Adrenal gland (tissue), 19 donors: ENCODE measurements at regions of chr1 and their contacts with region 1.

Region 1: DNA sequence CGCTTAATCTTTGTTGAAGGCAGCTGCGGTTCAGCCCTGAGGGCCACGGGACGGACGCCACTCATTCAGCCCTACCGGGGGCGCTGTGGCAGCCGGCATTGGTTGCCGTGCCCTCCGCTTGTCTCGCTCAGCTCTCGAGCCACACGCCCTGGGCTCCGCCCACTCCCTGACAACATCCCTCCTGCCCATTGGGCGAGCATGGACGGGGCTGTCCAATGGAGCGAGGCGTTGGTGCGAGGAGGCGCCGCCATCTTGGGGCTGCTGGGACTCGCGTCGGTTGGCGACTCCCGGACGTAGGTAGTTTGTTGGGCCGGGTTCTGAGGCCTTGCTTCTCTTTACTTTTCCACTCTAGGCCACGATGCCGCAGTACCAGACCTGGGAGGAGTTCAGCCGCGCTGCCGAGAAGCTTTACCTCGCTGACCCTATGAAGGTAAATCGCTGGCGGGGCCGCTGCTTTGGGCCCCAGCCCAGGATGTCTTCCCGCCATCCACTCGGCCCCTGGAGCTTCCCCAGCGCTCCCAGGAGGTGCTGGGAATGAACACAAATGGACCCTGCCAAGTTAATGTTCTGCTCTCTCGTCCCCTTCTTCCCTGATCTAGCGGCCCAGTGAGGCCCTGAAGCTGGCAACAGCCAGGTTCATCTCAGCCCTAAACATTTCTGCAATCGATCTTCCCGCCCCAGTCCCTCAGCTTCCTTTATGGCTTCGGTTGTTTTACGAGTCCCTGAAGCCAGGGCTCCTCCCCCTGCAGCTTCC is at the start of gene SRP9:
- DNase-seq: peak; percentile 98 to 99 (median 99)
- H3K4me3 ChIP-seq: peak within 1 kb of the TSS; percentile 18 to 70 (median 41)
- H3K27ac ChIP-seq: peak within 1 kb of the TSS; percentile 27 to 98 (median 89)
- H3K4me1 ChIP-seq: peaks cover 17 to 61% of the 10 kb centered on the region in 2 donors
- H3K27me3 ChIP-seq: no peaks in the 10 kb centered on the region
- CTCF ChIP-seq: peak; percentile 68 to 93 (median 88)
- POLR2A ChIP-seq: peak; percentile 76 to 90
- total RNA-seq, gene SRP9: 197 to 429 (median 294) TPM

Region 2: DNA sequence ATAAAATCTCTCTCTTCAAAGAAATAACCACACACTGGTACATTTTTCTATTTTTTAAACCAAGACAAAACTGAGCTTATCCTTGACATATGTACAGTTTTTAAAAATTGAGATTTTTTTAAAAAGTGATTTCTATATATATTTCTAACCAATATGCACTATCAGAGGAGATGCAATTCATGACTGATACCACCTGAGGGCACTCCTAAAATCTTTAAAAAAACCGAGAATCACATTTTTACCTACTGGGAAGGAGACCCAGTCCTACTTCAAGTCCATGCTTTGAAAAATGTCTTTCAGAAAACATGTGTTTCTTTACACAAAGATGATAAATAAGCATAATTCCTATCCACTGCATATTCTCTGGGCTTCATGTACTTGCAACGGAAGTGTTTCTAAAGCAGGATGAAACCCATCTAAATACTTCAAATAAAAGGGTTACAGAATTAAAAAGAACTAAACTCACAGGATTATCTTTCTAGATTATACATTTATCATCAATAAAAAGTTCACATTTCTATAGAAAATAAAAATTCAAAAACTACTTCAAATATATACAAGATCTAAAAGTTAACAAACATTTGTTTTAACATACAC is 223.4 kb before region 1 on chr1:
- intact Hi-C with region 1: loop called (anchors 5 to 10 kb)
- DNase-seq: no peak
- H3K4me3 ChIP-seq: no peak overlapping the region
- H3K27ac ChIP-seq: no peak overlapping the region
- H3K4me1 ChIP-seq: no peaks in the 10 kb centered on the region
- H3K27me3 ChIP-seq: no peaks in the 10 kb centered on the region
- CTCF ChIP-seq: peak; percentile 24 to 69 (median 57)
- POLR2A ChIP-seq: no peak

Region 3: GRCh38 chr1:225809842-225810578 is 32.2 kb after region 1 on chr1 and contains the start of gene EPHX1:
- intact Hi-C with region 1: loop called in 1 of 2 experiments (anchors 2 kb)
- DNase-seq: peak; percentile 91 to 95 (median 93)
- H3K4me3 ChIP-seq: peak within 1 kb of the TSS; percentile 30 to 93 (median 78)
- H3K27ac ChIP-seq: peak within 1 kb of the TSS; percentile 81 to 98 (median 97)
- H3K4me1 ChIP-seq: peaks cover 41 to 47% of the 10 kb centered on the region in 2 donors
- H3K27me3 ChIP-seq: no peaks in the 10 kb centered on the region
- CTCF ChIP-seq: peak in 4 of 6 experiments; percentile 12 to 41 (median 20)
- POLR2A ChIP-seq: peak; percentile 94 to 97
- total RNA-seq, gene EPHX1: 251 to 3,548 (median 1,695) TPM

Region 4: GRCh38 chr1:225845571-225846259 is 68.0 kb after region 1 on chr1:
- intact Hi-C with region 1: loop called in 1 of 2 experiments (anchors 10 kb)
- DNase-seq: peak; percentile 79 to 89 (median 87)
- H3K4me3 ChIP-seq: no peak overlapping the region
- H3K27ac ChIP-seq: peak overlapping the region in 3 of 5 donors; percentile 42 to 80 (median 54)
- H3K4me1 ChIP-seq: peaks cover 4 to 11% of the 10 kb centered on the region in 2 donors
- H3K27me3 ChIP-seq: no peaks in the 10 kb centered on the region
- CTCF ChIP-seq: peak; percentile 45 to 80 (median 69)
- POLR2A ChIP-seq: peak in 1 of 2 donors; percentile 12

Region 5: GRCh38 chr1:225911191-225912130 is 133.7 kb after region 1 on chr1:
- intact Hi-C with region 1: loop called (anchors 5 to 10 kb)
- DNase-seq: peak; percentile 53 to 78 (median 69)
- H3K4me3 ChIP-seq: peak overlapping the region in 2 of 4 donors; percentile 13 to 39
- H3K27ac ChIP-seq: no peak overlapping the region
- H3K4me1 ChIP-seq: peaks cover 10 to 12% of the 10 kb centered on the region in 2 donors
- H3K27me3 ChIP-seq: no peaks in the 10 kb centered on the region
- CTCF ChIP-seq: peak; percentile 73 to 96 (median 88)
- POLR2A ChIP-seq: no peak

Region 6: DNA sequence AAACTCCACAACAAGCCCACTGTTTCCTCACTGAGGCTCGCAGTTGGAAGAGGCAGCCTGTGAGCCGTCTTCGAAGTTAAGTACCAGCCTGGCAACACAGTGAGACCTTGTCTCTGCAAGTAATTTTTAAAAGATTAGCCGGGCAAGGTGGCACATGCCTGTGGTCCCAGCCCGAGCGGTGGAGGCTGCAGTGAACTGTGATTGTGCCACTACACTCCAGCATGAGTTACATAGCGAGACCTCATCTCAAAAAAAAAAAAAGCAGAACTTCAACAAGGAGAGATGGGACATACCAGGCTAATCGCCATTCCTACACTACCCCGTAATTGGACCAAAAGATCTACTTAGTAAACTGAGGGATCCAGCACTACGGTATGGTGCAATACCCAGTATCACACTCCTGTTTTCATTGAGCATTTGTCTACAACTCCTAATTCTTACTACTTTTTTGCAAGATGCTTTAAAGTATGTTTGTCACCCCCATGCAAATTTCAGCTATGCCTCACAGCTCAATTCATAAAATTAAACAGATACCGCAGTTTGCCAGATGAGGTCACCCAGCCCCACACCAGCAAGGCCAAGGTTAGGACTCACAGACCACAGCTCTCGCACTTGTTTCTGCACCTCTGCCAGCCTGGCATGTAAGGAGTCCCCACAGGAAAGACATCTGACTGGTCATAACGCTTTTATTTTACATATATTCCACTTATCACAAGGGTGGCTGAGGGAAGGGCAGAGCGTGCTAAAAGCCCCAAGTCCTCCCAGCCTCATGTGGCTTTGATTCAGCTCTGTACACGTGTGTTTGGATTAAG is 200.4 kb after region 1 on chr1:
- intact Hi-C with region 1: loop called in 1 of 2 experiments (anchors 10 kb)
- DNase-seq: peak in 5 of 7 donors; percentile 39 to 69 (median 62)
- H3K4me3 ChIP-seq: no peak overlapping the region
- H3K27ac ChIP-seq: no peak overlapping the region
- H3K4me1 ChIP-seq: no peaks in the 10 kb centered on the region
- H3K27me3 ChIP-seq: no peaks in the 10 kb centered on the region
- CTCF ChIP-seq: no peak
- POLR2A ChIP-seq: no peak